GM18951 (cell line): ENCODE measurements at regions of chr16 and their contacts with region 1.

Region 1: DNA sequence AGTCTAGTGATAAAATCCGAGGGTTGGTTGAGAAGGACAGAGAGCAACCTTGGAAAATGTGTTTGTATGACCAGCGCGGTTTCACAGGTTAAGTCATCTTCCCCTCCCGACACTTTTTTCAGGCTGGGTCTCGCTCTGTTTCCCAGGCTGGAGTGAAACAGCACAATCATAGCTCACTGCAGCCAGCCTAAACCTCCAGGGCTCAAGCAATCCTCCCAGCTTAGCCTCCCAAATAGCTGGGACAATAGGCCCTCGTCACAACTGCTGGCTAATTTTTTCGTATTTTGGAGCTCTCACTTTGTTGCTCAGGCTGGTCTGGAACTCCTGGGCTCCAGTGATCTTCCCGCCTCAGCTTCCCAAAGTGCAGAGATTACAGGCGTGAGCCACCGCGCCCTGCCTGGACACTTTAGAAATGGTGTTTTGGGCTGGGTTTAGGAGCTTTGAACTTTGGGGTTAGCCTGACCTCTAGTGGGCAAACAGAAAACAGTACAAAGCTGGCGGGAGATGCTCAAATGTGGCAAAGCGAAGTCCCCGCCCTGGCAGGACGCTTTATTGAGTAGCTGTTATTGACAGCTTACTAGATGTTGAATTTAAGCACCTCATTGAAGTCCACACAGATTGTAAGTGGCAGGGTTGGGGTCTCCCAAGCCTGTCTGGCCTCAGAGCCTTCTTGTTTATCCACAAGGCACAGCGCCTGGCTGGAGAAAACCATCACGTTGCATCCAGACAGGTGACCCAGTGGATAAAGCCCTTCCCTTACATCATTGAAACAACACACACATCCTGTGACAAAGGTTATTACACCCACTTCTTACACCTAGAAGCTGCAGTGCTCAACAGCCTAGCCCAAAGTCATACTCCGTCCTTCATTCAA is 34.7 kb upstream of the RBBP6 start:
- POLR2A ChIP-seq: no peak

Region 2: GRCh38 chr16:23784811-23785447 is 719.8 kb before region 1 on chr16:
- in situ Hi-C with region 1: loop called (anchors 25 kb)
- POLR2A ChIP-seq: no peak

Region 3: DNA sequence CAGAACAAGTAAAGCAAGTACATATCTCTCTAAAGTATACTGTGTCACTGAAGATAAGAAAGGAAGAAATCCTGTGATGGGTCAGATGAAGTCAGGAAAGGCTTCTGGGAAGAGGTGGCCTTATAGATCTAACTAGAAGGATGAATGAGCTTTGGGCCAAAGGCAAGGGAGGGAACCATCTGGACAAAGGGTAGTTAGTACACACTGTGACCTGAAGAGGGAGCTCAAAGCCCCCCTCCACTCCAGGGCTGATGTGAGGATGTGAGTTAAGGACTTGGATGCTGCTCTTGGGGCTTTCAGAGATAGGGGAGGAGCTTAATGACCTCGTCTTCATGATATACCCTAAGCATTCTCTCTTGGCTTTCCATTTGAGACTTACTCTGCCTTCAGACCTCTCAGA is 433.9 kb before region 1 on chr16:
- in situ Hi-C with region 1: loop called (anchors 25 kb)
- POLR2A ChIP-seq: no peak

Region 4: DNA sequence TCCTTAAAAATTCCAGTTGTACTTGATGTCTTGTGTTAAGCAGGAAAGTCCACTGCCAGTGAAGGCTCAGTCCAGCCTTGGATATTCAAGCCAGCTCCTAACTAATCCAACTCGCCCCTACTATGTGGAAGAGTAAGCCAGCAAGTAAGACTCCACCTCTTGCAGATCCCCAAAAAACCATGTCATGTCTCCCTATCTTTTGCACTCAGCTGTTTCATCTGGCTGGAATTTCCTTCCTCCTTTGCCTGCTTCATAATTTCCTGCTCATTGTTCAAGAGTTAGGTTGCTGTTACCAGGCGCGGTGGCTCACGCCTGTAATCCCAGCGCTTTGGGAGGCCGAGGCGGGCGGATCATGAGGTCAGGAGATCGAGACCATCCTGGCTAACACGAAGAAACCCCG is 72.5 kb after region 1 on chr16:
- in situ Hi-C with region 1: no loop called
- POLR2A ChIP-seq: no peak

Region 5: DNA sequence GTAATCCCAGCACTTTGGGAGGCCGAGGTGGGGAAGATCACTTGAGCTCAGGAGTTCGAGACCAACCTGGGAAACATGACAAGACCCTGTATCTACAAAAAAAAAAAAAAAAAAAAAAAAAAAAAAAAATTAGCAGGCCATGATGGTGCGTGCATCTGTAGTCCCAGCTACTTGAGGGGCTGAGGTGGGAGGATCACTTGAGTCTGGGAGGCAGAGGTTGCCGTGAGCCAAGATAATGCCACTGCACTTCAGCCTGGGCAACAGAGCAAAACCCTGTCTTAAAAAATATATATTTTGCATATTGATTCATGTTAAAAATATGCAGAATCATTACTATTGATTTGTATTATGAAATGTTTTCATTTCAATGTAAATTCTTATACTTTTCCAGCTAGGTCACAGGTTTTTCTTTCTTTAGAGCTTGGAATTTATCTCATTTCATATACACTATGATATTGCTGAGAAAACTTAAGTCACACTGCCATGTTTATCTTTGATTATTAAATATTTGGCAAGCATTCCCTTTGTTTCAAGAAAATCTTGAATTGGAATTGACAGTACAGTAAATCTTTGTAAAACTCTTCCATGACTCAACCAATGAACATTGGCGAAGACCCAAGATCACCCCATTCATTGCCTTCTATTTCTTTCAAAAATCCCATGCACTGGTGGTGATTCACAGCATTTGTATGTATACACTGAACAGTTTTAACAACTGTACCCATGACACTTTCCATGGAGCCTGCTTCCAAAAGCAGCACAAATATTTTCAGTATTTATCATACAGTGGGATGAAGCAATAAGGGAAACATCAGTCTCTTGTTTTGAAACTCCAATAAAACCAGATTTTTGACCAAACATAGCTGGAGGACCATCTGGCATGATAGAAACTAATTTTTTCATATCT is 141.3 kb after region 1 on chr16:
- in situ Hi-C with region 1: no loop called
- POLR2A ChIP-seq: no peak